Activated CD4-positive, alpha-beta T cell treated with anti-CD3 and anti-CD28 coated beads, Interleukin-2, amount 10 ng/mL, durations not matched to agents 7 days and 5 days (primary cell): ENCODE measurements at regions of chr5 and their contacts with region 1.

Region 1: DNA sequence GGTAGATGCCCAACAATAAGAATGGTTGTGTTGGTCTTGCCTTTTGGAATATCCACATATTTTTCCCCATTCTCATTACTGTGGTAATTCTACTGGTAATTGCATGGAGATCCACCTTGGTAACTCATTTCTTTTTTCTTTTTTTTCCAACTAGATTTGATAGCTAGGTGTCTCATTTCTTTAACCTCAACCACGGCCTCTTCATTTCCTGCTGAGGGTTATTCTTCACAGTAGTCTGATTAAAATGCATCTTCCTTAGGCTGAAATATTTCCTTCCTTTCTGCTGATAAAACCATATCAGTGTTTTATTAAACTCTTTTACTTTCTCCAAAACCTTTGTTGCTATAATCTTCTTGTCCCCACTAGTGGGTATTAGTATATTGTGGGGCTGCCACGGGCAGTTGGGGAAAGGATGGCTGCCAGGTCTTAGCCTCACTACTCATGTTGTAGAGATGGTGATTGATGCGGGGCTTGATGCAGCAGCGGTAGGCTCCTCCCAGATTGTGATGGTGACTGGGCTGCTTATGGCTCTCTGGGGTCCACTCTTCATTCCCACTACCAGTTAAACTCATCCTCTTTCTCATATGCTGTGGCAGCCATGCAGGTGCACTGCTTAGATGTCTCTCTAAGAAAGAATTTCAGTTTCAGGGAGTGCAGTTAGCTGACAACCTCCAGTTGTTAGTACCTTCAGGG is 35.9 kb downstream of the KIF2A start:
- DNase-seq: peak; percentile 16
- H3K4me3 Mint-ChIP-seq: peak overlapping the region; percentile 40
- H3K27ac Mint-ChIP-seq: peak overlapping the region; percentile 65
- H3K4me1 Mint-ChIP-seq: peaks cover 46% of the 10 kb centered on the region
- H3K27me3 Mint-ChIP-seq: no peaks in the 10 kb centered on the region

Region 2: GRCh38 chr5:62281411-62281810 is 60.5 kb before region 1 on chr5:
- CTCF ChIA-PET with region 1: no interaction called
- POLR2A ChIA-PET with region 1: no interaction called
- DNase-seq: no peak
- H3K4me3 Mint-ChIP-seq: no peak overlapping the region
- H3K27ac Mint-ChIP-seq: no peak overlapping the region
- H3K4me1 Mint-ChIP-seq: peaks cover 66% of the 10 kb centered on the region
- H3K27me3 Mint-ChIP-seq: no peaks in the 10 kb centered on the region

Region 3: DNA sequence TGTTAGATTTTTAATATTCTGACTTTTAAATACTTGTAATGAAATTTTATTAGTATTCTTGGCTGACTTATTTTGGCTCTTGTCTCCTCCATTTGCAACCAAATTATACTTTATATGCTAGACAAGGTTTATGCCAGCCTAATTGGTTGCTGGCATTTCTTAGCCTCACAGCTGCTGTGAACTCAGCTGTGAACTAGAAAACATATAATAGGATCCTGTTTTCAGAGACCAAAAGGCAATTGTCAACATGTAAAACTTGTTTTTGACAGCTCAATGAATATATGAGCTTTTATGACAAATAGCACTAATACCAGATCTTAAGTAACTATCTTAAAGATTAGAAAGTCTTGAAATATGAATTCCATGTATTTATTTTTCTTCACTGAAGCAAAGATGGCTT is 10.0 kb before region 1 on chr5:
- CTCF ChIA-PET with region 1: interaction called, 12 read pairs
- POLR2A ChIA-PET with region 1: no interaction called
- DNase-seq: no peak
- H3K4me3 Mint-ChIP-seq: no peak overlapping the region
- H3K27ac Mint-ChIP-seq: no peak overlapping the region
- H3K4me1 Mint-ChIP-seq: peaks cover 56% of the 10 kb centered on the region
- H3K27me3 Mint-ChIP-seq: no peaks in the 10 kb centered on the region

Region 4: GRCh38 chr5:62354028-62354874 is 12.3 kb after region 1 on chr5:
- CTCF ChIA-PET with region 1: interaction called, 13 read pairs
- POLR2A ChIA-PET with region 1: no interaction called
- DNase-seq: peak; percentile 44
- H3K4me3 Mint-ChIP-seq: no peak overlapping the region
- H3K27ac Mint-ChIP-seq: no peak overlapping the region
- H3K4me1 Mint-ChIP-seq: peaks cover 8% of the 10 kb centered on the region
- H3K27me3 Mint-ChIP-seq: no peaks in the 10 kb centered on the region